ENCODE measurements at regions of chr16 and their contacts with region 1.

Region 1: GRCh38 chr16:75402821-75403475 is 30.4 kb downstream of the CFDP1 start:
- H3K4me3 ChIP-seq: no peak overlapping the region
- H3K27ac ChIP-seq: no peak overlapping the region
- H3K4me1 ChIP-seq: no peaks in the 10 kb centered on the region
- CTCF ChIP-seq: 0 out of 2 replicates have a peak, but pooled peaks have one; percentile 19

Region 2: DNA sequence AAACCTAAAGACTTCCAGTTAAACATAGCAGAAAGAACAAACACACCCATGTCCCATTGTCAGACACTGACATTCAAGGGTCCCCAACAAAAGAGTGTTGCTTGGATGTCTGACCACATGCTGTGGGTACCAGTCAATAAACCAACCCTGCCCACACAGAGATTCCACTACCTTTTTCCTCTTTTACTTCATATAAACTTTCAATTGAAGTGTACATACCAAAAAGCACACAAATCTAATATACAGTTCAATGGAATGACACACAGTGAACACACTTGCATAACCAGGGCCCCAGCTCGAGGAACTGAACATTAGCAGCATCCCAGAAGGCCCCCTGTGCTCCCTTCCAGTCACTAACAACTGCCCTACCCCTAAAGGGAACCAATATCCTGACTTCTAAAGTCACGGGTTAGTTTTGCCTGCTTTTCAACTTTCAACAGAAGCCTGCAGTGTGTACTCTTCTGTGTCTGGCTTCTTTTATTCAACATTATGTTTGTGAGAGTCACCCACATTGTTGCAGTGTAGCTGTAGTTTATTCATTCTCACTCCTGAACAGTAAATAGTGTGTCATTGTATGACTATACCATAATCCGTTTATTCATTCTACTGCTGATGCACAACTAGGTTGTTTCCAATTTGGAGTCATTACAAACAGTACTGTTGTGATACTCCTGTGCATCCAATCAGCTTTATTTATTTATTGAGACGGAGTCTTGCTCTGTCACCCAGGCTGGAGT is 12.4 kb after region 1 on chr16:
- CTCF ChIA-PET with region 1: interaction called, 15 read pairs
- POLR2A ChIA-PET with region 1: no interaction called
- H3K4me3 ChIP-seq: no peak overlapping the region
- H3K27ac ChIP-seq: no peak overlapping the region
- H3K4me1 ChIP-seq: peaks cover 3% of the 10 kb centered on the region; the same call in 1 of the 2 replicates
- CTCF ChIP-seq: no peak

Measured in HEK293 (cell line).